Right lobe of liver (tissue), 6 donors: ENCODE measurements at regions of chr11 and their contacts with region 1.

Region 1: DNA sequence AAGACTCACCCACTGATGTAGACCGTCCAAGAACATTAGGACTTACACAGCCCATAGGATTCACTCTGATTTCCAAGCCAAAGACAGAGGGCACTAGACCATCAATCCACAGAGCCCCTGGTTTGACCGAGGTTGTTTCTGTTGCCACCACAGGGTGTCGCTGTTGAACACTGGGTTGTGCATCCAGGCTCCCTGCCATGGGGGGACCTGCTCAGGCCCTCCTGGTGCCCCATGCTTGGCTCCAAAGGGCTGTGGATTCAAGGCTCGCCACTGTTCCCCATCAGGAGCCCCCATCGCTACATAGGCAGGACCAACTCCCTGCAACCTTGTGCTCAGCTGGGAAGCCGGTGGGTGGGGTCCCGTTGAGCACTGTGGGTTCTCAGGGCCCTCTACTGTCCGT is 128.0 kb upstream of the ANO1 start:
- DNase-seq: peak; percentile 45 to 74 (median 69)
- ATAC-seq: peak; percentile 87 to 94 (median 88)
- H3K4me3 ChIP-seq: no peak overlapping the region
- H3K27ac ChIP-seq: peak overlapping the region in 1 of 3 donors; percentile 5
- H3K4me1 ChIP-seq: peaks cover 0 to 16% (median 5%) of the 10 kb centered on the region in 4 donors
- H3K27me3 ChIP-seq: no peaks in the 10 kb centered on the region
- CTCF ChIP-seq: peak; percentile 84 to 96 (median 90)
- POLR2A ChIP-seq: no peak

Region 2: DNA sequence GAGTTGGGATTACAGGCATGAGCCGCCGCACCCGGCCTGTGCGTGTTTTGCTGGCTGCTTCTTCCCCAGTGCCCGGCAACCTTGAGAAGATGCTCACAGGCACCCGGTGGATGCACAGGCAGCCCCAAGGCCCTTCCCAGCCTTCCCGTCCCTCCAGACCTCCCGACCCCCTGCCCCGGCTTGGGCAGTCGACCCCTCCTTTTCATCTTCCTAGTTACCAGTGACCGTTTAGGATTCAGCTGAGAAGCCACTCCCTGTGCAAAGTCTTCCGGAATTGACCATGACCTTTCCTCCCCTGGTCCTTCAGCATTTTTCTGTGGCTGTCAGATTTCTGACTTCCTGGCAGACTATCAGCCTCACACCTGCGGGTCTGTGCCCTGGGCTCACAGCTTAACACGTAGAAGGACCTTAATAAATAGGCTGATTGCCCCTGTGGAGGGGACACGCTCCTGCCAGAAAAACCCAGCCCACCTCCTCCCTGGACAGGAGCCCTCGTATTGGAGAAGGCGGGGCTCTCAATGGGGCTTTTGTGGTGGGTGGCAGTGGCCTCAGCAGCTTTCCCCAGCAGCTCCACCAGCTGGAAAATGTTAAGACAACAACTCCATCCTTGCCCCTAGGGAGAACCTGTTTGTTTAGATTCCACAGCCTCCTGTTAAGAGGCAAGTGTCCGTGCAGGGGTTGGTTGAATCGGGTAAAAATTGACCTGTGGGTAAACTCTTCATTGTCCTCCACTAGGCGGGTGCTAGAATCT is 117.6 kb after region 1 on chr11:
- intact Hi-C with region 1: loop called in 1 of 2 experiments (anchors 10 kb)
- DNase-seq: peak in 1 of 3 donors; percentile 39
- ATAC-seq: peak in 2 of 4 donors; percentile 26 to 36
- H3K4me3 ChIP-seq: no peak overlapping the region
- H3K27ac ChIP-seq: no peak overlapping the region
- H3K4me1 ChIP-seq: peaks cover 0 to 6% (median 0%) of the 10 kb centered on the region in 4 donors
- H3K27me3 ChIP-seq: no peaks in the 10 kb centered on the region
- CTCF ChIP-seq: no peak
- POLR2A ChIP-seq: no peak